GM12878 (cell line): ENCODE measurements at regions of chr15 and their contacts with region 1.

Region 1: GRCh38 chr15:57146506-57147201 is 228.2 kb downstream of the TCF12 start:
- DNase-seq: no peak
- ATAC-seq: peak; percentile 64; the same call in 2 of the 3 replicates
- H3K4me3 ChIP-seq: no peak overlapping the region
- H3K27ac ChIP-seq: no peak overlapping the region; the same call in 1 of the 2 replicates
- H3K4me1 ChIP-seq: peaks cover 15% of the 10 kb centered on the region
- H3K27me3 ChIP-seq: no peaks in the 10 kb centered on the region
- CTCF ChIP-seq: peak; percentile 42 to 70 (median 59); a peak in 5 of 6 replicates
- EP300 ChIP-seq: no peak
- POLR2A ChIP-seq: no peak
- RAD21 ChIP-seq: peak; percentile 77

Region 2: GRCh38 chr15:56918046-56918938 is 228.4 kb before region 1 on chr15 and contains the start of gene TCF12:
- CTCF ChIA-PET with region 1: interaction called, 13 read pairs
- POLR2A ChIA-PET with region 1: no interaction called
- RAD21 ChIA-PET with region 1: interaction called, 7 read pairs
- SMC1A ChIA-PET with region 1: interaction called, 7 read pairs
- in situ Hi-C with region 1: no loop called
- intact Hi-C with region 1: no loop called
- DNase-seq: peak; percentile 68
- ATAC-seq: peak; percentile 88
- H3K4me3 ChIP-seq: peak within 1 kb of the TSS; percentile 86
- H3K27ac ChIP-seq: peak within 1 kb of the TSS; percentile 69
- H3K4me1 ChIP-seq: no peaks in the 10 kb centered on the region; the same call in 1 of the 2 replicates
- H3K27me3 ChIP-seq: no peaks in the 10 kb centered on the region
- CTCF ChIP-seq: peak; percentile 52 to 56 (median 53)
- EP300 ChIP-seq: no peak
- POLR2A ChIP-seq: peak; percentile 89
- RAD21 ChIP-seq: peak; percentile 60
- polyA plus RNA-seq, gene TCF12: 8.2 to 9.0 TPM

Region 3: DNA sequence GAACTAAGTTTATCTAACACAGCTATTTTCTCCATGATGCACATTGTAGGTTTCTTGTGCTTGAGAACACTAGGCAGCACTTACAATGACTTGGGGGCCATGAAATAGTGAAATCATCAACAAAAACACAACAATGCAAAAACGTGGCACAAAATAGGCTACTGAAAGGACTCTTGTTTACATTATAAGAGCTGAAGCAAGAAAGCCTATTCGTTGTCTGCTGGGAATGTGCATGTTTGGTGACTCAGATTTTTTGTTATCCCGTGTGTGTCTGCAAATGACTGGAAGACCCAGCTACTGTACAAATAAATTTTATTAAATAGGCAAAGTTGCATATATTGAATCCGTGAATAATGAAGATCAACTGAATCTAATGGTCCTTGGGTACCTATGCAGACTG is 143.2 kb before region 1 on chr15:
- CTCF ChIA-PET with region 1: no interaction called
- POLR2A ChIA-PET with region 1: no interaction called
- RAD21 ChIA-PET with region 1: no interaction called
- SMC1A ChIA-PET with region 1: no interaction called
- in situ Hi-C with region 1: no loop called
- intact Hi-C with region 1: no loop called
- DNase-seq: no peak
- ATAC-seq: no peak
- H3K4me3 ChIP-seq: no peak overlapping the region
- H3K27ac ChIP-seq: no peak overlapping the region
- H3K4me1 ChIP-seq: no peaks in the 10 kb centered on the region
- H3K27me3 ChIP-seq: no peaks in the 10 kb centered on the region
- CTCF ChIP-seq: no peak
- EP300 ChIP-seq: no peak
- POLR2A ChIP-seq: no peak
- RAD21 ChIP-seq: no peak

Region 4: GRCh38 chr15:57041416-57041815 is 105.2 kb before region 1 on chr15:
- CTCF ChIA-PET with region 1: no interaction called
- POLR2A ChIA-PET with region 1: no interaction called
- RAD21 ChIA-PET with region 1: no interaction called
- SMC1A ChIA-PET with region 1: no interaction called
- in situ Hi-C with region 1: no loop called
- intact Hi-C with region 1: no loop called
- DNase-seq: no peak
- ATAC-seq: no peak
- H3K4me3 ChIP-seq: no peak overlapping the region
- H3K27ac ChIP-seq: no peak overlapping the region
- H3K4me1 ChIP-seq: peaks cover 21% of the 10 kb centered on the region
- H3K27me3 ChIP-seq: no peaks in the 10 kb centered on the region
- CTCF ChIP-seq: no peak
- EP300 ChIP-seq: no peak
- POLR2A ChIP-seq: no peak
- RAD21 ChIP-seq: no peak

Region 5: DNA sequence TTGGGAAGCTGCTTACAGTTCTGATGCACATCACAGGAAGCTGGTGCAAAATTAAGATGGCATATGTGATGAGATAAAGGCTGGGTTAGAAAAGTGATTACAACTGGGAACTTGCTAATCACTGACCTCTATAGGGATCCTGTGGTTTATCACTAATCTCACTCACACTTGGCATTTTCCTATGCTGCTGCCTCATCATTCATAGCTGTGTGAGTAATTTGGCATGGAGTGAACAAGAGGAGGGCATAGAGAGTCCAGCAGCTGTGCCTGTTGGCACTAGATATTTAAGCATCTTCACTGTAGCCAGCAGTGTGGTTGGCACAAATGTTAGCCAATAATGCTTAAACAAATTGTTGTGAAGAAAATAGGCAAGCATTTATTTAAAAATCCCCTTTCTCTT is 11.9 kb after region 1 on chr15:
- CTCF ChIA-PET with region 1: interaction called, 21 read pairs
- POLR2A ChIA-PET with region 1: interaction called, 3 read pairs
- RAD21 ChIA-PET with region 1: interaction called, 8 read pairs
- SMC1A ChIA-PET with region 1: interaction called, 46 read pairs
- in situ Hi-C with region 1: no loop called
- intact Hi-C with region 1: no loop called
- DNase-seq: no peak
- ATAC-seq: no peak
- H3K4me3 ChIP-seq: no peak overlapping the region
- H3K27ac ChIP-seq: no peak overlapping the region
- H3K4me1 ChIP-seq: peaks cover 2% of the 10 kb centered on the region; the same call in 1 of the 2 replicates
- H3K27me3 ChIP-seq: no peaks in the 10 kb centered on the region
- CTCF ChIP-seq: no peak
- EP300 ChIP-seq: no peak
- POLR2A ChIP-seq: no peak
- RAD21 ChIP-seq: no peak

Region 6: DNA sequence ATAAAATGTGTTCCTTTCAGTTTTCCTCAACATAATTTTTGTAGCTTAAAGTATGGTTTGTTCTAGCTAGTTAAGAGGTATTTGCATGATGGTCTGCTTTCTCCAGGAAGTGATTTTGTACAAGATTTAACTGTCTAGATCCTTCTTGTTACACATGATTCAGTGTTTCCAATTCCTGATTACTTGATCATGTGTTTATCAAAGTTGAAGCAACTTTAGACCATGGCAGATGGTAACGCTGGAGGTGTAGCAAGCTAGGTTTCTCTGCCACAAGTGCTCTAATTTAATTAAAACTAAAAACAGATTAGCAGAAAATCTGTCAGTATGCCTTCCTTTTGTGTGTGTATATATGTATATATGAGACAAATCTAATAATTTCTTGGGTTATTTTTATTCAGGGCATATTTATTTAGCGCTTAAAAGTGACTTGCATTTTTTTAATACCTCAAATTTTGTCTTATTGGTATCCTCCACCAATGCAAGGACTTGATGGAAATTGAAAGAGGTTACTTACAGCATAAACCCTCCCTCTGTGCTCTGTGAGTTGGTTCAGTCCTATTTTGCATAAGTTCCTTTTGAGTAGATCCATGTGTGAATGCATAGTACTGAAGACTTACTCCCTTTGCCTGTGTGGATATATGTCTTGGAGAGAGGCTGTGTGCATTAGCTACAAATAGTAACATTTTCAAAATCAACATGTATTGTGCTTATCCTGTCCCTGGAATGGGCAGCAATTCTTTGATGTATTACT is 72.3 kb after region 1 on chr15:
- CTCF ChIA-PET with region 1: interaction called, 102 read pairs
- POLR2A ChIA-PET with region 1: no interaction called
- RAD21 ChIA-PET with region 1: interaction called, 36 read pairs
- SMC1A ChIA-PET with region 1: interaction called, 73 read pairs
- in situ Hi-C with region 1: no loop called
- intact Hi-C with region 1: no loop called
- DNase-seq: no peak
- ATAC-seq: peak; percentile 74
- H3K4me3 ChIP-seq: no peak overlapping the region
- H3K27ac ChIP-seq: no peak overlapping the region
- H3K4me1 ChIP-seq: peaks cover 5% of the 10 kb centered on the region; the same call in 1 of the 2 replicates
- H3K27me3 ChIP-seq: no peaks in the 10 kb centered on the region
- CTCF ChIP-seq: no peak
- EP300 ChIP-seq: no peak
- POLR2A ChIP-seq: no peak
- RAD21 ChIP-seq: no peak

Region 7: DNA sequence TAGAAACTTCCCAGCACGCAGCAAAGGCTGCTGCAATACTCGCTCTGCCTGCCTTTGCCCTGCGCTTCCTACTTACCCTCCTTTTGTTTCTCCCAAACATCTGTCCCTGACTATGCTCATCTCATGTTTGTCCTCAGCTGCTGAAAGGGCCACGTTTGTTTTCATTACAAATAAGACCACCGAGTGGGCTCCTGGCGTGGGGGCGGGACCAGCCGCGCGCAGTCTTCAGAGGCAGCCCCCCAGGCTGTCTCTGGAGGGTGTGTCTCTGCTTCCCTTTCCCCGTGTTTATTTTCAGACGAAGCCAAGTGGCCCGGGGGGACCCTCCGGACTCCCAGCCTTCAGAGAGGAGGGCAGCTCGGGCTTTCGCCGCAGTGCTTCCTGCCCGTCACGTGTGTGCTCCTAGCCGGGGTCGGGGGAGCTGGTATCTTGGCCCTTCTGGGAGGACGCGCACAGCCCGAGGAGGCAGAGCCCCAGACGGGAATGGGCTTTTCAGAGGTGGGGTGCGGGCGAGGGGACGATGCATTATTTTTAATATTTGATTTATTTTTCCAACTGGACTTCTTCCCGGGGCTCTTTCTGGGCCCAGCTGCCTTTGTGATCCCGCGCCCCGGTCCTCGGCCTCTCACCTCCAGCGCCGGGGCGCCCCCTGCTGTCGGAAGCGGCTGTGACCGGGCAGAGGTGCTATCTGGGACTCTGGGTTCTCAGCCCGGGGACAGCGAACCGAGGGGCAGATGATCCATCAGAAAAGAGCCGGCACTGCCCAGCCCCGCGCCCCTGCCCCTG is 159.7 kb after region 1 on chr15:
- CTCF ChIA-PET with region 1: interaction called, 267 read pairs
- POLR2A ChIA-PET with region 1: interaction called, 11 read pairs
- RAD21 ChIA-PET with region 1: interaction called, 145 read pairs
- SMC1A ChIA-PET with region 1: interaction called, 176 read pairs
- in situ Hi-C with region 1: loop called (anchors 5 kb)
- intact Hi-C with region 1: loop called (anchors 1 kb)
- DNase-seq: no peak
- ATAC-seq: peak; percentile 85
- H3K4me3 ChIP-seq: peak overlapping the region; percentile 79
- H3K27ac ChIP-seq: peak overlapping the region; percentile 52
- H3K4me1 ChIP-seq: peaks cover 14% of the 10 kb centered on the region
- H3K27me3 ChIP-seq: no peaks in the 10 kb centered on the region
- CTCF ChIP-seq: peak; percentile 80 to 91 (median 89); a peak in 5 of 6 replicates
- EP300 ChIP-seq: no peak
- POLR2A ChIP-seq: no peak
- RAD21 ChIP-seq: peak; percentile 96

Region 8: GRCh38 chr15:57534281-57534680 is 387.6 kb after region 1 on chr15:
- CTCF ChIA-PET with region 1: interaction called, 72 read pairs
- POLR2A ChIA-PET with region 1: no interaction called
- RAD21 ChIA-PET with region 1: interaction called, 47 read pairs
- SMC1A ChIA-PET with region 1: interaction called, 39 read pairs
- in situ Hi-C with region 1: loop called (anchors 5 kb)
- intact Hi-C with region 1: loop called (anchors 10 kb)
- DNase-seq: no peak
- ATAC-seq: no peak
- H3K4me3 ChIP-seq: no peak overlapping the region
- H3K27ac ChIP-seq: no peak overlapping the region
- H3K4me1 ChIP-seq: no peaks in the 10 kb centered on the region
- H3K27me3 ChIP-seq: no peaks in the 10 kb centered on the region; a peak in 3 of 4 replicates
- CTCF ChIP-seq: no peak
- EP300 ChIP-seq: no peak
- POLR2A ChIP-seq: no peak
- RAD21 ChIP-seq: no peak